HepG2 (cell line): ENCODE measurements at regions of chr4 and their contacts with region 1.

Region 1: DNA sequence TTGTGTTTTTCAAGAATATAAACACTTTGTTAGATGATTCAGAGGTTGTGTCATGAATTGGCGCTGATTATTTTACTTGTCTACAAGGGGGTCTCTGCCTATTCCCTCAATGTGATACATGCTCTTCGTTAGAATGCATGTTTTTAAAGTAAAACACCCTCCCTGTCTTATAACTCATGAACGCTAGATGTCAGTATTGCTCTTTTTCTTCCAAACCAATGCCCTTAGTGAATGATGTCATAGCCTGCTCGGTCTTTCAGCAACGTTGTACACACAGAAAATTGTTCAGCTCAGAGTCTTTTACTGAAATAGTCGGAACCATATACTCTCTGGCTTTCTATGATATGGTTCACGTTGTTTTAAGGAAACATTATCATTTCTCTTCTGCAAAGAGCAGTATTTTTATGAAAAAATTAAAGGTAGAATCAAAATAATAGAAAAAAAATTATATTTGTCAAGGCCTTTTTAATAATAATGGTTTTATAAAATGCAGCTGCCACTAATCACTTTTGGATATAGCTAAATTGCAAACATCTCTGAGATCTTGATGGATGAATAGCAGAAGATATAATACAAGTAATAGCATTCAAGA is 292.9 kb downstream of the TLL1 start:
- DNase-seq: peak; percentile 73
- ATAC-seq: peak; percentile 96
- H3K4me3 ChIP-seq: no peak overlapping the region
- H3K27ac ChIP-seq: no peak overlapping the region
- H3K4me1 ChIP-seq: no peaks in the 10 kb centered on the region
- H3K27me3 ChIP-seq: no peaks in the 10 kb centered on the region
- CTCF ChIP-seq: peak; percentile 85
- EP300 ChIP-seq: no peak
- POLR2A ChIP-seq: no peak
- RAD21 ChIP-seq: peak; percentile 62

Region 2: DNA sequence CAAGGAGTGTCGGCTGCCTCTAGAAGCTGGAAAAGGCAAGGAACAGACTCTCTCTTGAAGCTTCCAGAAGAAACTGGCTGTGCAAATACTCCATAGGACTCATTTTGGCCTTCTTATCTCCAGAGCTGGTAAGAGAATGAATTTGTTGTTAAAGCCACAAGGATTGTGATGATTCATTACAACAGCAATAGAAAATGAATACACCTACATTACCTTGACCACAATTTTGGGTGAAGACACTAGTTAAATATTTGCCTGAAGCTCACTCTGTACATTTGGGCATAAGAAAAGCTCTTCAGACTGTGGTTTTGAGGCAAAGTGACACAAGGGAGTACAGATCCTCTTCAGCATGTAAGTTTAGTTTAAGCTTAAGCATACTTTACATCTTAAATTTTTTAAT is 427.4 kb before region 1 on chr4:
- CTCF ChIA-PET with region 1: no interaction called
- POLR2A ChIA-PET with region 1: no interaction called
- in situ Hi-C with region 1: no loop called
- intact Hi-C with region 1: no loop called
- DNase-seq: no peak
- ATAC-seq: no peak
- H3K4me3 ChIP-seq: no peak overlapping the region
- H3K27ac ChIP-seq: no peak overlapping the region
- H3K4me1 ChIP-seq: no peaks in the 10 kb centered on the region
- H3K27me3 ChIP-seq: no peaks in the 10 kb centered on the region
- CTCF ChIP-seq: no peak
- EP300 ChIP-seq: no peak
- POLR2A ChIP-seq: no peak
- RAD21 ChIP-seq: no peak

Region 3: GRCh38 chr4:166143227-166143626 is 22.7 kb before region 1 on chr4:
- CTCF ChIA-PET with region 1: no interaction called
- POLR2A ChIA-PET with region 1: no interaction called
- in situ Hi-C with region 1: no loop called
- intact Hi-C with region 1: no loop called
- DNase-seq: no peak
- ATAC-seq: no peak
- H3K4me3 ChIP-seq: no peak overlapping the region
- H3K27ac ChIP-seq: no peak overlapping the region
- H3K4me1 ChIP-seq: no peaks in the 10 kb centered on the region
- H3K27me3 ChIP-seq: no peaks in the 10 kb centered on the region
- CTCF ChIP-seq: no peak
- EP300 ChIP-seq: no peak
- POLR2A ChIP-seq: no peak
- RAD21 ChIP-seq: no peak

Region 4: DNA sequence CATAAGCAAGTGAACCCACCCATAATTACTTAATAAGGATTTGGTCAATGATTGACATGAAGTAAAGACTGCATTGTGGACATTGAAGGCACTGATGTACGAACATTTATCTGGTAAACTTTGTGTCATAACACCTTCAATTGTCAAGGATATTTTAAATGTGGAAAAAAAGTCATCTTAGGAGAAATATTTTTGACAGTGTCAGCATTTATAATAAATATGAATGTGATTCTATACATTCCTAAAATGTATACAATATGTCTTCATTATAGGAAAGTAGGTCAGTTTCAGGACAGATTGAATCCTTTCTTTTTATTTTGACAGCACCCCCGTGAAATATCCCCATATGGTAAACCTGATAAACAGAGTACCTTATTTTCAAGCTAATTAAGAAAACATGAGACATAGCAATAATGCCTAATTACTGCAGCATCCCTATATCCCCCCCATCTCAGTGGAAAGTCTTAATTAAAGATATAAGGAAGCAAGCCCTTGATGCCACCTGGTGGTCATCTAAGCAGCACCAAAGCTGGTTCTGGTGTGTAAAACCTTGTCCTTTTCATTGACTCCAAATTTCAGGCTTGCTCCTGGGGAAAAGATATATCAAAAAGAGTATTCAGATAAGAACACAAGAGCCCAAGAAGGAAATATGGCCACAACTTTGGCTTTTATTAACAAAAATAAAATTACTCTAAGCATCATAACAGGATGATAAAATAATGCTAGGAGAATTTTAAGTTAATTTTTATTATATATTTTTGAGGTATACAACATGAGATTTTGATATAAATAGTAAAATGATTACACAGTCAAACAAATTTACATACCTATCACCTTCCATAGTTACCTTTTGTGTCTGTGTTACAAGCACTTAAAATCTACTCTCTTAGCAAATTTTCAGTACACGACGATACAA is 86.8 kb after region 1 on chr4:
- CTCF ChIA-PET with region 1: interaction called, 24 read pairs
- POLR2A ChIA-PET with region 1: no interaction called
- in situ Hi-C with region 1: no loop called
- intact Hi-C with region 1: loop called (anchors 1 kb)
- DNase-seq: peak; percentile 10
- ATAC-seq: peak; percentile 47; the same call in 1 of the 3 replicates
- H3K4me3 ChIP-seq: no peak overlapping the region
- H3K27ac ChIP-seq: no peak overlapping the region
- H3K4me1 ChIP-seq: no peaks in the 10 kb centered on the region
- H3K27me3 ChIP-seq: no peaks in the 10 kb centered on the region
- CTCF ChIP-seq: peak; percentile 46
- EP300 ChIP-seq: no peak
- POLR2A ChIP-seq: no peak
- RAD21 ChIP-seq: no peak

Region 5: DNA sequence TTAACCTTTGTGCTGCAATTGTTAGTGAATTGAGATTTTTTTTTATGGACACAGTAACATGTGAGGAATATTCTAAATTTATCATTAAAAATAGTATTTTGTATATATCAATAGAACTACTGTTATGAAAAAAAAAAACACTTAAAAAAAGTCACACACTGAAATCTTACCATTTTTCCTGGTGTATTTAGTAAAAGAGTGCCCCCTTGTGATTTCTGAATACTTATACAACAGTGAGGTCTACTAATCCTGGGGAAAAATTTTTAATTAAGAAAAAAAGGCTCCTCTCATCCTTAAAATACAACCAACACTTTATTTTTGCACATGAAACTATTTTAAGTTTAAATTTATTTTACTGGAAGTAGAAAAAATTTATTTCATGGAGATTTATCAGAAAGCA is 1124.8 kb after region 1 on chr4:
- CTCF ChIA-PET with region 1: no interaction called
- POLR2A ChIA-PET with region 1: no interaction called
- in situ Hi-C with region 1: no loop called
- intact Hi-C with region 1: loop called (anchors 5 kb)
- DNase-seq: no peak
- ATAC-seq: no peak
- H3K4me3 ChIP-seq: no peak overlapping the region
- H3K27ac ChIP-seq: no peak overlapping the region
- H3K4me1 ChIP-seq: no peaks in the 10 kb centered on the region
- H3K27me3 ChIP-seq: no peaks in the 10 kb centered on the region; a peak in 1 of 5 replicates
- CTCF ChIP-seq: 0 out of 2 replicates have a peak, but pooled peaks have one; percentile 15
- EP300 ChIP-seq: no peak
- POLR2A ChIP-seq: no peak
- RAD21 ChIP-seq: no peak